ENCODE measurements at regions of chr17 and their contacts with region 1.

Region 1: DNA sequence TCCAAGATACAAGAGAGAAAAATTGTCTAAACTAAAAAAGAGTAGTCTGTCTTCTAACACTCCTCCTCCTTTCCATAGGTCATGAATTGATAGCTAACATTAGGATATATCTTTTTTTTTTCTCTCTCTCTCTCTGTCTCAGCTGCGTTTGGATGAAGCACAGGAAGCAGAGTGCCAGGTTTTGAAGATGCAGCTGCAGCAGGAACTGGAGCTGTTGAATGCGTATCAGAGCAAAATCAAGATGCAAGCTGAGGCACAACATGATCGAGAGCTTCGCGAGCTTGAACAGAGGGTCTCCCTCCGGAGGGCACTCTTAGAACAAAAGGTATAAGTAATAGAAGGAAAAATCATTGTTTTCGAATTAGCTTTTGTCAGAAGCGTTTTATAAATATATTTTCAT is 32.9 kb downstream of the ABHD15 start:
- DNase-seq: no peak
- H3K4me3 ChIP-seq: no peak overlapping the region
- H3K27ac ChIP-seq: no peak overlapping the region
- H3K4me1 ChIP-seq: no peaks in the 10 kb centered on the region
- H3K27me3 ChIP-seq: no peaks in the 10 kb centered on the region
- CTCF ChIP-seq: no peak
- EP300 ChIP-seq: no peak
- RAD21 ChIP-seq: no peak

Region 2: DNA sequence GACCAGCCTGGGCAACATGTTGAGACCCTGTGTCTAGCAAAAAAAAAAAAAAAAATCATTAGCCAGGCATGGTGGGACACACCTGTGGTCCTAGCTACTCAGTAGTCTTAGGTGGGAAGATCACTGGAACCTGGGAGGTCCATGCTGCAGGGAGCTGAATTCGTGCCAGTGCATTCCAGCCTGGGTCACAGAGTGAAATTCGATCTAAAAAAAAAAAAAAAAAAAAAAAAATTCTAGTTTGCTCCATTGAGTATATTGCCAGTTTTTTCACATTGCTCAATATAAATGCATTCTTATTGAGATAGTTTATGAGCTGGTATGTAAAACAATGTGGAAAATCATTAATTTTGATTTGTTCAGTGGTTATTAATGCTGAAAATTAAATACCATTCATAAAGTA is 19.2 kb before region 1 on chr17:
- CTCF ChIA-PET with region 1: interaction called, 10 read pairs
- POLR2A ChIA-PET with region 1: no interaction called
- DNase-seq: no peak
- H3K4me3 ChIP-seq: no peak overlapping the region
- H3K27ac ChIP-seq: peak overlapping the region in 1 of 2 experiments; percentile 7; a peak in 1 of 4 replicates
- H3K4me1 ChIP-seq: 0 out of 4 replicates have a peak, but pooled peaks cover 0 to 7% of the 10 kb centered on the region in 2 experiments
- H3K27me3 ChIP-seq: no peaks in the 10 kb centered on the region
- CTCF ChIP-seq: no peak
- EP300 ChIP-seq: no peak
- RAD21 ChIP-seq: no peak

Region 3: DNA sequence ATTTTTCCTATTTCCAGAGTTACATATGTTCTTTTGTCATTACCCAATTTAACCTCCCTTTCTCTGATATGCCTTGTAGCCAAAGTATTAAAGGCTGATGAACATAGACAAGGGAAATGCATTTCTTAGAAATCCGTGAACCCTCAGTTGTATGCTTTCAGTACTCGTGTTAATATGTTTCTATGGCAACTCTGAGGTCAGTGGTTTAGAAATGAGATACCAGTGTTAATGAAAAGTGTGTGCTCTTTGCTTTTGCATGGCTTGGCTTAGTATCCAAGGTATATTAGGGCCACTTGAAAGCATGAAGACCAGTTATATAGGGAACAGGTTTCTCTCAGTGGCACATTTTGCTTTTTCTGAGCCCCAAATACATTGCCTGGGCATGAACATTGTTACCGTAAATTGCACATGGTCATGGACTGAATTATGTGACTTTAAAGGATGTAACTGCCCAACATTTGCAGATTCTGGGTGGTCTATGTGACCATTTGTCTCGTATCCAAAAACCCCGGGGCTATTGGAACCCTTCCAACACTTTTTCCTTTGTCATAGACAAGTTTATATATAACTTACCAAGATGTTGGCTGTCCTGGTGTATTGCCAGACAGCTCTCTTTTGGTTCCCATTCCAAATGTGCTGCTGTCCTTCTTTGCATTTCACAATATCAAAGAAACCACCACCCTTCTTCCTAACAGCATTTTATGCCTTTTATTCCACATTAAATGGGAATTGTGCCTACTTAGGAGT is 15.4 kb after region 1 on chr17:
- CTCF ChIA-PET with region 1: interaction called, 14 read pairs
- POLR2A ChIA-PET with region 1: no interaction called
- DNase-seq: peak; percentile 25
- H3K4me3 ChIP-seq: no peak overlapping the region
- H3K27ac ChIP-seq: peak overlapping the region in 1 of 2 experiments; percentile 47; a peak in 1 of 4 replicates
- H3K4me1 ChIP-seq: peaks cover 4 to 7% of the 10 kb centered on the region in 2 experiments; a peak in 3 of 4 replicates
- H3K27me3 ChIP-seq: no peaks in the 10 kb centered on the region
- CTCF ChIP-seq: no peak
- EP300 ChIP-seq: no peak
- RAD21 ChIP-seq: no peak

Measured in SK-N-SH (cell line).